Prostate gland (tissue), 2 donors: ENCODE measurements at regions of chr1 and their contacts with region 1.

Region 1: GRCh38 chr1:243323491-243323890 is 67.7 kb downstream of the SDCCAG8 start:
- DNase-seq: no peak
- H3K4me3 ChIP-seq: no peak overlapping the region
- H3K27ac ChIP-seq: no peak overlapping the region
- H3K4me1 ChIP-seq: no peaks in the 10 kb centered on the region
- H3K27me3 ChIP-seq: no peaks in the 10 kb centered on the region
- CTCF ChIP-seq: no peak
- POLR2A ChIP-seq: no peak

Region 2: DNA sequence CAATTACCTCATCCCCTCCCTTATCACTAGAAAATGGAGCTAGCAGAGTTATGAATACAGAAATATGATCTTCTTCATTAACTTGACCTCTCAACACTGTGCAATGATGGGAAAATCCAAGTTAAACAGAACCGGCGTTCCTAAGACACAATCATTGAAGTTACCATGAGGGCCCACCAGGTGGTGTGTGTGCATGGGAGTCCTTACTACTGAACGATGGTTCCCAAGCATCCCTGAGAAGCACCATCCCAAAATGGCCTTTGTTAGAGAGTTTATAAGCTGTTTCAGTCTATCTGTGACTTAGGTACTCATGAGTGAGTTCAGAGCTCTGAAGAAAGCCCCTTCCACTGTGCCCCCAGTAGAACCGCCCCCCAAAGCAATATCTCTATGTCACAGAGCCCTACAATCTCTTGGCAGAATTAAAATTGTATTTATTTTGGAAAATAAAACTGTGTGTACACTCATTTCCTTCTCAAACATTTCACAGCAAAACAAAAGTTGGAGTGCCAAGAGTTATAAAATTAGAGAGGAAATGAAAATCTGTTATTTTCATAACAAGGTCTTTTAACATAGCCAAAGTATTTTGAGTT is 855.8 kb before region 1 on chr1:
- intact Hi-C with region 1: loop called (anchors 5 kb)
- DNase-seq: no peak
- H3K4me3 ChIP-seq: no peak overlapping the region
- H3K27ac ChIP-seq: no peak overlapping the region
- H3K4me1 ChIP-seq: no peaks in the 10 kb centered on the region
- H3K27me3 ChIP-seq: no peaks in the 10 kb centered on the region
- CTCF ChIP-seq: peak in 3 of 4 experiments; percentile 47 to 55 (median 52)
- POLR2A ChIP-seq: no peak

Region 3: DNA sequence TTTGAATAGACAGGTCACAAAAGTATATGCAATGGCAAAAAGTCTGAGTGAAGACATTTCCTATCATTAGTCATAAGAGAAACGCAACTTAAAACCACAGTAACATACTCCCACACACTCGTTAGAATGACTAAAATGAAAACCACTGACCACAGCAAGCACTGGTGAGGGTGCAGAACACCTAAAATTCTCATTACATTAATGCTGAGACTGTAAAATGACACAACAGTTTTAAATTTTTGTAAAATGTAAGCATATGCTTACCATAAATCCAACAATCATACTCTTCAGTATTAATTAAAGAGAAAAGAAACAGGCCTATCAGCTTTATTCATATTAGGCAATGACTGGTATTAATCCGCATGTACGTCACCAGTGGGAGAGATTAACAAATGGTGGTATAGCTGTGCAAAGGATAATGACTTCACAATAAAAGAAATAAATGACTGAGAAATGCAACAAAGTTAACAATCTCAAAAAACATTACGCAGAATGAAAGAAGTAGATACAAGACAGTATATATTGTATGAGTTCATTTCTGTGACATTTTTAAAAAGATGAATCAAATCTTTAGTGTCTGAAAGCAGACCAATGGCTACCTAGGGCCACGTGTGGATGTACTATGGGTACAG is 273.1 kb after region 1 on chr1:
- intact Hi-C with region 1: no loop called
- DNase-seq: no peak
- H3K4me3 ChIP-seq: no peak overlapping the region
- H3K27ac ChIP-seq: no peak overlapping the region
- H3K4me1 ChIP-seq: no peaks in the 10 kb centered on the region
- H3K27me3 ChIP-seq: no peaks in the 10 kb centered on the region
- CTCF ChIP-seq: no peak
- POLR2A ChIP-seq: no peak